Naive thymus-derived CD4-positive, alpha-beta T cell (primary cell): ENCODE measurements at regions of chr5 and their contacts with region 1.

Region 1: DNA sequence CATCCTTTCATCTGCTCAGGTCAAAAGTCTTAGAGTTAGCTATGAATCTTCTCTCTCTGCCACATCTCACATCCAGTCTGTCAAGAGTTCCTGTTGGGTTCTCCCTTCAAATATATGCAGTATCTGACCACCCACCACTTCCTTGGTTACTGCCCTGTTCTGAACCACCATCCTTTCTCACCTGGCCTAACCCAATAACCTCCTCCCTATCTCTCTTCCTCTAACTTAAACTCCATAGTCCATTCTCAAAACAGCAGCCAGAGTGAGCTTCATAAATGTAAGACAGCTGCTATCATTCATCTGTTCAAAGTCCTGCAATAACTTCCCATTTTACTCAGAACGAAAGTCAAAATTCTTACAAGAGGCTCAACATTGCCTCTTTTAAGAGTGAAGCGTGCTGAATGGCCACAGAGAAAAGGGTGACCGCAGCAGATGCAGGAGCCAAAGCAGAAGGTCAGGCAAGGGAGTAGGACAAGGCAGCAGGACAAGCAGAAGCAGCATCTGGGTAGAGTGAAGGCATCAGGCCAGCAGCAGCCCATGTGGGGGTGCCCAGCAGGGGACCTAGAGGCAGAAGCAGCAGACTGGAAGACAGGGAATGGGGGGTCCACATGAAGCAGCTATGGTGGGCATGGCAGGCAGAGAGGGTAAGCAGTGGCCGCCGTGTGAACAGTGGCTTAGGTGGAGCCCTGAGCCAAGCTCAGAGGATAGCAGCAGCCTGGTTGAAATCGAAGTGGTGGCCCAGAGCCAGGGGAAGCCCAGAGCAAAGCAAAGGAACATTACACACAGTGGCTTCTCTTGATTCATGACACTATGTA is 39.3 kb upstream of the CDC42SE2 start:
- DNase-seq: peak in 2 of 9 donors; percentile 7 to 12
- ATAC-seq: peak; percentile 73
- H3K4me3 ChIP-seq: no peak overlapping the region
- H3K4me3 Mint-ChIP-seq: no peak overlapping the region
- H3K27ac ChIP-seq: no peak overlapping the region
- H3K27ac Mint-ChIP-seq: no peak overlapping the region
- H3K4me1 ChIP-seq: peaks cover 14 to 15% of the 10 kb centered on the region in 2 donors
- H3K4me1 Mint-ChIP-seq: peaks cover 2 to 16% (median 9%) of the 10 kb centered on the region in 7 donors
- H3K27me3 ChIP-seq: no peaks in the 10 kb centered on the region
- H3K27me3 Mint-ChIP-seq: no peaks in the 10 kb centered on the region

Region 2: DNA sequence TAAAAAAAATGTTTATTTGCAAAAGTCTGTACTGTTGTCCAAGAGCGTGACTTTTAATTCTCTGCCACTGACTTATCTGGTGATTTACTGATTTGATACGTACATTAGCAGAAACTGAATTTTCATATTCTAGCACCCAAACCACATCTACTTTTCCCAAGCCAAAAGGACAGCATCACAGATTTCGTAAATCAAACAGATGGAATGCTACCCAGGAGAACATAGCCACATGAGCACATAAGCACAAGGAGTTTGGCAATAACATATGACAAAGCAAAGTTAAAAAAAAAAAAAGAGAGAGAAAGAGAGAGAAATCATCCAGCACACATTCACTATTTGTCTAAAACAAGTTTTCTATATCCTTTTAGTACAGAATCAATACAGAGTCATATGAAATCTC is 143.2 kb before region 1 on chr5:
- CTCF ChIA-PET with region 1: no interaction called
- POLR2A ChIA-PET with region 1: no interaction called
- intact Hi-C with region 1: no loop called
- DNase-seq: no peak
- ATAC-seq: no peak
- H3K4me3 ChIP-seq: no peak overlapping the region
- H3K4me3 Mint-ChIP-seq: peak overlapping the region in 1 of 10 donors; percentile 10
- H3K27ac ChIP-seq: no peak overlapping the region
- H3K27ac Mint-ChIP-seq: peak overlapping the region in 1 of 9 donors; percentile 38
- H3K4me1 ChIP-seq: peaks cover 8 to 10% of the 10 kb centered on the region in 2 donors
- H3K4me1 Mint-ChIP-seq: peaks cover 17 to 39% (median 30%) of the 10 kb centered on the region in 7 donors
- H3K27me3 ChIP-seq: no peaks in the 10 kb centered on the region
- H3K27me3 Mint-ChIP-seq: peaks cover 0 to 4% (median 0%) of the 10 kb centered on the region in 5 donors

Region 3: GRCh38 chr5:131096774-131097710 is 127.6 kb before region 1 on chr5:
- CTCF ChIA-PET with region 1: no interaction called
- POLR2A ChIA-PET with region 1: no interaction called
- intact Hi-C with region 1: no loop called
- DNase-seq: no peak
- ATAC-seq: no peak
- H3K4me3 ChIP-seq: no peak overlapping the region
- H3K4me3 Mint-ChIP-seq: no peak overlapping the region
- H3K27ac ChIP-seq: no peak overlapping the region
- H3K27ac Mint-ChIP-seq: peak overlapping the region in 1 of 9 donors; percentile 10
- H3K4me1 ChIP-seq: no peaks in the 10 kb centered on the region
- H3K4me1 Mint-ChIP-seq: peaks cover 0 to 13% (median 4%) of the 10 kb centered on the region in 7 donors
- H3K27me3 ChIP-seq: no peaks in the 10 kb centered on the region
- H3K27me3 Mint-ChIP-seq: peaks cover 0 to 11% (median 0%) of the 10 kb centered on the region in 5 donors

Region 4: GRCh38 chr5:131148835-131149234 is 75.8 kb before region 1 on chr5:
- CTCF ChIA-PET with region 1: no interaction called
- POLR2A ChIA-PET with region 1: no interaction called
- intact Hi-C with region 1: no loop called
- DNase-seq: no peak
- ATAC-seq: no peak
- H3K4me3 ChIP-seq: no peak overlapping the region
- H3K4me3 Mint-ChIP-seq: no peak overlapping the region
- H3K27ac ChIP-seq: no peak overlapping the region
- H3K27ac Mint-ChIP-seq: no peak overlapping the region
- H3K4me1 ChIP-seq: no peaks in the 10 kb centered on the region
- H3K4me1 Mint-ChIP-seq: peaks cover 0 to 3% (median 0%) of the 10 kb centered on the region in 7 donors
- H3K27me3 ChIP-seq: no peaks in the 10 kb centered on the region
- H3K27me3 Mint-ChIP-seq: peaks cover 0 to 3% (median 0%) of the 10 kb centered on the region in 5 donors

Region 5: DNA sequence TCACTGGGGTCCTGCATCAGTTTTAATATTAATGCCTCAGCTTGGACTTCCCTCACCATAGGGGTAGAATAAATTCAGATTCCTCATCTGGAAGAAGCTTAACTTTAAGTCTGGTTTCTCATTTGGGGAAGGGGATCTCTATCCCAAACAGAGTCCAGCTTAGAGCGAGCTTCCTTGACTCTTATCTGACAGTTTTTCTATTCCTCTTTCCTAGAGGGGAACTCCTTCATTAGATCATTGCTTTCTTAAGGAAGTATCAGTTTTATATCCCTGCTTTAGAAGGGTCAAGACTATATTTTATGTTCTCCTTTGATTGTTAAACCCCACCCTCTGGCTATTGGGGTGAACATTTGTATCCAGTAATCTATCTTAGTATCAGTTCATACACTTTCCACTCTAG is 15.1 kb after region 1 on chr5:
- CTCF ChIA-PET with region 1: no interaction called
- POLR2A ChIA-PET with region 1: interaction called, 3 read pairs
- intact Hi-C with region 1: loop called in 1 of 2 experiments (anchors 2 kb)
- DNase-seq: no peak
- ATAC-seq: no peak
- H3K4me3 ChIP-seq: no peak overlapping the region
- H3K4me3 Mint-ChIP-seq: no peak overlapping the region
- H3K27ac ChIP-seq: no peak overlapping the region
- H3K27ac Mint-ChIP-seq: no peak overlapping the region
- H3K4me1 ChIP-seq: no peaks in the 10 kb centered on the region
- H3K4me1 Mint-ChIP-seq: peaks cover 0 to 11% (median 2%) of the 10 kb centered on the region in 7 donors
- H3K27me3 ChIP-seq: no peaks in the 10 kb centered on the region
- H3K27me3 Mint-ChIP-seq: no peaks in the 10 kb centered on the region

Region 6: GRCh38 chr5:131303537-131303936 is 78.9 kb after region 1 on chr5:
- CTCF ChIA-PET with region 1: no interaction called
- POLR2A ChIA-PET with region 1: no interaction called
- intact Hi-C with region 1: no loop called
- DNase-seq: no peak
- ATAC-seq: no peak
- H3K4me3 ChIP-seq: no peak overlapping the region
- H3K4me3 Mint-ChIP-seq: peak overlapping the region in 5 of 10 donors; percentile 0 to 46 (median 28)
- H3K27ac ChIP-seq: peak overlapping the region; percentile 23
- H3K27ac Mint-ChIP-seq: peak overlapping the region in 6 of 9 donors; percentile 2 to 62 (median 36)
- H3K4me1 ChIP-seq: peaks cover 45 to 55% of the 10 kb centered on the region in 2 donors
- H3K4me1 Mint-ChIP-seq: peaks cover 53 to 77% (median 71%) of the 10 kb centered on the region in 7 donors
- H3K27me3 ChIP-seq: no peaks in the 10 kb centered on the region
- H3K27me3 Mint-ChIP-seq: no peaks in the 10 kb centered on the region